CD8-positive, alpha-beta memory T cell (primary cell): ENCODE measurements at regions of chr4 and their contacts with region 1.

Region 1: DNA sequence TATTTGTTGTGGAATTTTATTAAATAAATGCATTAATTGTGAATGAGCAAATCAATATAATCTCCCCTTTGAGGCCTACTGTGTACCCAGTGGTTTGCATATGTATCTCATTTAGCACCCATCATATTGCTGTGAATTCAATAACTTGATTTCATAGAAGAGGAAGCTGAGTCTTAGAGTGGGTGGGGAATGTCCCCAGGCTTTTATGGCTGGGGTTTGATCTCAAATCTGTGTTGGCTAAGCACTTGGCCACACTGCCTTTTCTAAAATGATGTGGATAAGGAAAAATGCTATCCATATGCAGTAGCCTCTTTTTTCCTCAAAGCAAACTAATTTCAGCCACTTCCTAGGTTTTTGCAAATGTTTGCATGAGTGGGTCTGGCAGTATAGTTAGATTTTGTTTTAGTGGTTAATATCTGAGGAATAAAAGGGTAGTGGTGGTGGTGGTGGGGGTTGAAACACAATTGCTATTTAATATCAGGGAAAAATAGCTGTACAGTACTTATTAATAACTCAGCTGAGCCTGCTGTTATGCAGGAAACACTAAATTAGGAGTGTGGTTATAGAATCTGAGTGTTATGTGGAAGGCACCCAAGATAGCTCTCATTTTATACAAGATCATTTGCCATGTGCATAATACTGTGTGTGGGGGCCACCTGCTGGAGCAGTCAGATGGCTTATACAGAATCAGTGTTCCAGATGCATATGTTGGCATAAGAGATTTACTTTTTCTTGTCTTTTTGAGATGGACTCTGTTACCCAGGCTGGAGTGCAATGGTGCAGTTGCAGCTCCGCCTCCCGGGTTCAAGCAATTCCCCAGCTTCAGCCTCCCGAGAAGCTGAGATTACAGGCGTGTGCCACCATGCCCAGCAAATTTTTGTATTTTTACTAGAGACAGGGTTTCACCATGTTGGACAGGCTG is 108.0 kb downstream of the TMEM131L start:
- DNase-seq: peak; percentile 33 to 80 (median 52)
- H3K4me3 ChIP-seq: no peak overlapping the region
- H3K4me3 Mint-ChIP-seq: peak overlapping the region in 3 of 7 donors; percentile 24 to 46 (median 30)
- H3K27ac ChIP-seq: no peak overlapping the region
- H3K27ac Mint-ChIP-seq: peak overlapping the region in 7 of 8 donors; percentile 22 to 90 (median 63)
- H3K4me1 ChIP-seq: peaks cover 20% of the 10 kb centered on the region
- H3K4me1 Mint-ChIP-seq: peaks cover 53 to 73% (median 65%) of the 10 kb centered on the region in 3 donors
- H3K27me3 ChIP-seq: no peaks in the 10 kb centered on the region
- H3K27me3 Mint-ChIP-seq: no peaks in the 10 kb centered on the region

Region 2: DNA sequence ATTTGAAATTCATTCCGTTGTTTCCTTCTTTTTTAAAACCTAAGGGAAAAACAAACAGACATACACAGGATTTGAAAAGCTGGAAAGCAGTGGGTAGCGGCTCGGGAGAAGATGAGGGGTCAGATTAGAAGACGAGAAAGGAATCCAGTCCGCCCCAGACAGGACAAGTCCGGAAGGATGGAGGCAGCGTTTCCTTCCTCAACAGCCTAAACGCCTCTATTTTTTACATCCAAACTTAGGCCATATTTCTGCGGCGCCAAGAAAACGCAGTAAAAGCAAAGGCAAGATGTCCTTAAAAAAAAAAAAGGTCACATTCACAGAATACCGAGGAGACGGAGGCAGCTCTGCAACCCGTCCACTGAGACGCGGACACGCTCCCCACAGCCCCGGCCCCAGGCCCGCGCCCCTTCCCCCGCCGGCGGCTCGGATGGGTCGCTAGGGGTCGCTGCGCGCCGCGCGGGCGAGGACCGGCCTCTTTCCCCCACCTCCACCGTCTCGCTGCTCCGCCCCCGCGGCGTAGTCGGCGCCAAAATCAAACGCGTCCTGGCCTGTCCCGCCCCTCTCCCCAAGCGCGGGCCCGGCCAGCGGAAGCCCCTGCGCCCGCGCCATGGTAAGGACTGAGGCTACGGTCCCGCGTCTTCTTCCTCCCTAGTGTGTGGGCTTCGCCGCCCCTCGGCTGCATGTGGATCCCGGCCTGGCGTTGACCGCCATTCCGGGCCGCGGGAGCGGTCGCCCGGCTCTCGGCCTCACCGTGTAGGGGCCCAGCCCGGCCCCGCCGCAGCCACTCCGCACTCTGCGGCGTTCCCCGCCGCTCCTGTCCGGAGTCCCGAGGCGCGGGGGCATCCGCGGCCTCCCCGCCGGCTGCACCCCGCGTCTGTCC is 229.8 kb before region 1 on chr4 and contains the start of gene MND1:
- CTCF ChIA-PET with region 1: interaction called, 41 read pairs
- POLR2A ChIA-PET with region 1: interaction called, 3 read pairs
- DNase-seq: peak; percentile 83 to 92 (median 86)
- H3K4me3 ChIP-seq: peak within 1 kb of the TSS; percentile 81
- H3K4me3 Mint-ChIP-seq: peak within 1 kb of the TSS; percentile 92 to 97 (median 95)
- H3K27ac ChIP-seq: peak within 1 kb of the TSS; percentile 55
- H3K27ac Mint-ChIP-seq: peak within 1 kb of the TSS in 6 of 8 donors; percentile 24 to 89 (median 64)
- H3K4me1 ChIP-seq: peaks cover 4% of the 10 kb centered on the region
- H3K4me1 Mint-ChIP-seq: peaks cover 8 to 29% (median 14%) of the 10 kb centered on the region in 3 donors
- H3K27me3 ChIP-seq: no peaks in the 10 kb centered on the region
- H3K27me3 Mint-ChIP-seq: peaks cover 6 to 16% of the 10 kb centered on the region in 2 donors
- total RNA-seq, gene MND1: 20.2 to 21.6 TPM

Region 3: DNA sequence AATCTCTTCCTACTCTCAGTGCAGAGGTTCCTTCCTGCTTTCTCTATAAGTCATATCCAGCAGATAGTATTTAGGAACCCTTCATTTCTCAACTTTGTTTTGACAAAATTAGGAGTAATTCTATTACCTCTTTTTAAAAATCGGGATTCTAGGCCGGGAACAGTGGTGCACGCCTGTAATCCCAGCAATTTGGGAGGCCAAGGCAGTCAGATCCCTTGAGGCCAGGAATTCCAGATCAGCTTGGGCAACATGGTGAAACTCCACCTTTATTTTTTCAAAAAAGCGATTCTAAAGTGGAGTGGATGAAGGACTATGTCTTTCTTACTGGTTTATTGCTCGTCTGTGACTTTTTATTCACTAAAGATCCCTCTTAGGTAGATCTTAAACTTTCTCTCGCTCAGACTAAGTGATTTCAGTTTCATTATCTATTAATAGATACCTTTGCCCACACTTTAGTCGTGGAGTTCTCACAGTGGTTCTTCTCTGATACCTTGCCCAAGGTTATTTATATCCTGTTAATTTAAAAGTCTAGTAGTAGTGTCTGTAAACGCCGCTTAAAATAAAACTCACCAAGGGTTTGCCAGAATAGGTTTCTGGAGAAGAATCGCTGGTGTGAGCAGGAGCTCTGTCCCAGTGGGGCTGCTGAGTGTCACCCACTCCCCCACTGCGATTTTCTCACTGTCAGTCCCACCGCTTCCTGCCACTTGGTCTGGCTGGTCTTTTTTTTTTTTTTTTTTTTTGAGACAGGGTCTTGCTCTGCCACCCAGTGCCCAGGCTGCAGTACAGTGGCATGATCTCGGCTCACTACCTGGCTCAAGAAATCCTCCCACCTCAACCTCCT is 135.0 kb before region 1 on chr4:
- CTCF ChIA-PET with region 1: interaction called, 133 read pairs
- POLR2A ChIA-PET with region 1: no interaction called
- DNase-seq: peak; percentile 12 to 61 (median 51)
- H3K4me3 ChIP-seq: peak overlapping the region; percentile 54
- H3K4me3 Mint-ChIP-seq: peak overlapping the region; percentile 82 to 95 (median 87)
- H3K27ac ChIP-seq: peak overlapping the region; percentile 25
- H3K27ac Mint-ChIP-seq: peak overlapping the region; percentile 72 to 95 (median 88)
- H3K4me1 ChIP-seq: peaks cover 28% of the 10 kb centered on the region
- H3K4me1 Mint-ChIP-seq: peaks cover 29 to 46% (median 42%) of the 10 kb centered on the region in 3 donors
- H3K27me3 ChIP-seq: no peaks in the 10 kb centered on the region
- H3K27me3 Mint-ChIP-seq: no peaks in the 10 kb centered on the region